Naive thymus-derived CD4-positive, alpha-beta T cell (primary cell): ENCODE measurements at regions of chr1 and their contacts with region 1.

Region 1: DNA sequence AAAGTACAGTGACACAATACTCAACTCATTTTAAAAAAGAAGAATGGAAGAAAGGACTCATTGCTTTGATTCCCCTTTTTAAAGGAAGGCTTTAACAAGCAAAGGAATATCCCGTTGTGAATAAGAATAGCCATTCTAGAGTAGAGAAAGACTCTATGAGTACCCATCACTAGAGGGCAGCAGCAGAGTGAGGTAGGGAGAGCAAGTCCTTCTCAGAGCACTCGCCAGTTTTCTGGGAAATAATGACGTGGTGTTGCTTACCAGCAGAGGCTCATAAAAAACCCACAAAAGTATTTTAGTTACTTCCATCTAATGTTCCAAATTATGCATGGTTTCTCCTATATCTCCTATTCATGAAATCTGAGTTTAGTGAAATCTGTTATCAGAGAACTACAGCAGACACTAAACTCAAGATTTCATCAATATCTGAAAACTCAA is 74.6 kb downstream of the USP24 start:
- DNase-seq: peak in 8 of 9 donors; percentile 51 to 79 (median 71)
- ATAC-seq: peak; percentile 97
- H3K4me3 ChIP-seq: no peak overlapping the region
- H3K4me3 Mint-ChIP-seq: peak overlapping the region in 1 of 10 donors; percentile 53
- H3K27ac ChIP-seq: no peak overlapping the region
- H3K27ac Mint-ChIP-seq: peak overlapping the region in 8 of 9 donors; percentile 55 to 76 (median 65)
- H3K4me1 ChIP-seq: peaks cover 0 to 5% of the 10 kb centered on the region in 2 donors
- H3K4me1 Mint-ChIP-seq: peaks cover 0 to 18% (median 12%) of the 10 kb centered on the region in 7 donors
- H3K27me3 ChIP-seq: no peaks in the 10 kb centered on the region
- H3K27me3 Mint-ChIP-seq: no peaks in the 10 kb centered on the region

Region 2: DNA sequence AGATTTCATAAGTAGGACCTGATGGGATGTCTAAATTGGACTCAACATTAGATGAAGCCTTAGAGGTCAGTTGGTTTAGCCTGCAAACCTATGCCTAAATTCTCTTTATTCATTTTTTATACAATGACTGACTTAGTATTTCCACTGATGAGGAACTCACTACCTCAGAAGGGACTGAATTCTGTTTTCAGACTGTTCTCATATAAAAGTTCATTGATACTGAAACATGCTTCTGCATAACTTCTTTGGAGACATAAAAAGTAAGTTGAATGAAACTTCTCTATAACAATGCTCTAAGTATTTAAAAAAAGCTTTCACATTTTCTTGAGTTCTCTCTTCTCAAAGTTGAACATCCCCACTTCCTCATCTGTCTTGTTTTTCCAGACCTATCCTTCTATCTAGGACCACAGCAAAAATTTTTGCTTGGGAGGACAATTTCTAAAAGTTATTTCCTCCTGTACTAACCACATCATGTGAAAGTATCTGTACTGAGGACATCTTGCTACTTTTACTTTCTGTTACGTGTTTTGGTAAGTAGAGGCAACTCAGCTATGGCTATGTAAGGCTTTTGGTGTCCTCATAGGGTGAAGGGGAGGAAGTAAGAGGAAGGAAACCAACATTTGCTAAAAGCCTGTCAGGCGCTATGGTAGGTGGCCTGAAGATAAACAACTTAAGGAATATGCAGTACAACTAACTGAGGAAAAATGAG is 10.5 kb after region 1 on chr1:
- CTCF ChIA-PET with region 1: interaction called, 11 read pairs
- POLR2A ChIA-PET with region 1: interaction called, 3 read pairs
- intact Hi-C with region 1: loop called in 1 of 2 experiments (anchors 1 kb)
- DNase-seq: peak in 6 of 9 donors; percentile 17 to 52 (median 38)
- ATAC-seq: peak; percentile 88
- H3K4me3 ChIP-seq: peak overlapping the region; percentile 36
- H3K4me3 Mint-ChIP-seq: peak overlapping the region; percentile 51 to 87 (median 70)
- H3K27ac ChIP-seq: peak overlapping the region; percentile 60
- H3K27ac Mint-ChIP-seq: peak overlapping the region; percentile 82 to 96 (median 92)
- H3K4me1 ChIP-seq: peaks cover 16 to 23% of the 10 kb centered on the region in 2 donors
- H3K4me1 Mint-ChIP-seq: peaks cover 11 to 49% (median 37%) of the 10 kb centered on the region in 7 donors
- H3K27me3 ChIP-seq: no peaks in the 10 kb centered on the region
- H3K27me3 Mint-ChIP-seq: no peaks in the 10 kb centered on the region

Region 3: DNA sequence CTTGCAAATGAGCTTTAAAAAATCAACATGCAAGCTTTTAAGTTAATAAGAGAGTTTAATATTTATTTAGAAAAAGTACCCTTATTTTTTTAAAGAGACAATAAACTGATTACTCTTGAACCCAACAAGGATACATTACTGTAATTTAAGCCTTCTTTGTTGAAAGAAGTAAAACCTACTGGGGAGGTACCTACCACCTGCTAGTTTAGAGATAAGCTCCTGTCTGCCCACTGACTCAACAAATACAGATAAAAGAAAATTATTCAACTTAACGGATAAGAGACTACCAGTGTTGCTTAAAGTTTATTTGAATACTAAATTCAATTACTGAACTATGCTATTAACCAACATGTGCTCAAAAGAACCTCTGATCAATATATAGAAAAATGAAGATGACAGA is 51.5 kb after region 1 on chr1:
- CTCF ChIA-PET with region 1: no interaction called
- POLR2A ChIA-PET with region 1: no interaction called
- intact Hi-C with region 1: no loop called
- DNase-seq: no peak
- ATAC-seq: no peak
- H3K4me3 ChIP-seq: no peak overlapping the region
- H3K4me3 Mint-ChIP-seq: peak overlapping the region in 2 of 10 donors; percentile 8 to 10
- H3K27ac ChIP-seq: no peak overlapping the region
- H3K27ac Mint-ChIP-seq: peak overlapping the region in 2 of 9 donors; percentile 19 to 37
- H3K4me1 ChIP-seq: peaks cover 16 to 28% of the 10 kb centered on the region in 2 donors
- H3K4me1 Mint-ChIP-seq: peaks cover 35 to 84% (median 79%) of the 10 kb centered on the region in 7 donors
- H3K27me3 ChIP-seq: no peaks in the 10 kb centered on the region
- H3K27me3 Mint-ChIP-seq: no peaks in the 10 kb centered on the region

Region 4: DNA sequence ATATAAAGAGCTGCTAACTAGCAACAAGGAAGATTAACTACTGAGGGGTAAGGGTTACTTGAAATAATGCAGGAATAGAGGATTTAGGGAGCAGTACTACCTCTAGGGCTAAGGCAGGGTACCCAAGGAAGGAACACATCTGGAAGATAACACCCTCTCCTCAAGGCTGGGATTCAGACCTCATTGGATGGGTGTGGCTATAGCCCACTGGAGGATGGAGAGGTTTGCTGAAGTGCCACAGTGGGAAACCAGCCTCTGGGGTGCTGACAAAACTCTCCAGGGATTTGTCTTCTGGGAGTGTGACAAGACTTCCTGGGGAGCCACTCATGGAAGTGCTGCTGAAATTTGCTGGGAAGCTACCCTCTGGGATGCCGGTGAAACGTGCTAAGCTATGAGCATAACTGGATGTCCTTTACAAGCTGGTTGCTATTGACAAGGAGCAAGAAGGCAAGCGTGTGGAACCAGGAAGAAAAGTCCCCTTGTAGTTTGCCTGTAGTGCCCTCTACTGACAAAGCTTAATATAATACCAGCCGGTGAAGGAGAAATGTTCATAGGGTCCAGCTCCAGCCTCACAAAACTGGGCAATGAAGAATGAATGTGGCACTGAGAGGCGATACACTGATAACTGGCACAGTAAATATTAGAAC is 197.4 kb after region 1 on chr1:
- CTCF ChIA-PET with region 1: no interaction called
- POLR2A ChIA-PET with region 1: no interaction called
- intact Hi-C with region 1: loop called (anchors 1 kb)
- DNase-seq: peak in 1 of 9 donors; percentile 4
- ATAC-seq: no peak
- H3K4me3 ChIP-seq: no peak overlapping the region
- H3K4me3 Mint-ChIP-seq: no peak overlapping the region
- H3K27ac ChIP-seq: no peak overlapping the region
- H3K27ac Mint-ChIP-seq: no peak overlapping the region
- H3K4me1 ChIP-seq: no peaks in the 10 kb centered on the region
- H3K4me1 Mint-ChIP-seq: peaks cover 0 to 9% (median 0%) of the 10 kb centered on the region in 7 donors
- H3K27me3 ChIP-seq: no peaks in the 10 kb centered on the region
- H3K27me3 Mint-ChIP-seq: peaks cover 0 to 17% (median 11%) of the 10 kb centered on the region in 5 donors